ENCODE measurements at regions of chr16 and their contacts with region 1.

Region 1: GRCh38 chr16:61306204-61306603 is 730.0 kb downstream of the CDH8 start:
- DNase-seq: no peak
- ATAC-seq: no peak
- H3K4me3 ChIP-seq: no peak overlapping the region
- H3K4me3 Mint-ChIP-seq: no peak overlapping the region
- H3K27ac ChIP-seq: no peak overlapping the region
- H3K27ac Mint-ChIP-seq: no peak overlapping the region
- H3K4me1 ChIP-seq: no peaks in the 10 kb centered on the region
- H3K4me1 Mint-ChIP-seq: no peaks in the 10 kb centered on the region
- H3K27me3 ChIP-seq: no peaks in the 10 kb centered on the region
- H3K27me3 Mint-ChIP-seq: no peaks in the 10 kb centered on the region

Region 2: GRCh38 chr16:61366006-61366405 is 59.8 kb after region 1 on chr16:
- CTCF ChIA-PET with region 1: no interaction called
- POLR2A ChIA-PET with region 1: no interaction called
- intact Hi-C with region 1: loop called in 1 of 2 experiments (anchors 10 kb)
- DNase-seq: no peak
- ATAC-seq: no peak
- H3K4me3 ChIP-seq: no peak overlapping the region
- H3K4me3 Mint-ChIP-seq: no peak overlapping the region
- H3K27ac ChIP-seq: no peak overlapping the region
- H3K27ac Mint-ChIP-seq: no peak overlapping the region
- H3K4me1 ChIP-seq: no peaks in the 10 kb centered on the region
- H3K4me1 Mint-ChIP-seq: no peaks in the 10 kb centered on the region
- H3K27me3 ChIP-seq: no peaks in the 10 kb centered on the region
- H3K27me3 Mint-ChIP-seq: no peaks in the 10 kb centered on the region

Measured in naive thymus-derived CD4-positive, alpha-beta T cell (primary cell).